Head of caudate nucleus (tissue), 42 donors: ENCODE measurements at regions of chr1 and their contacts with region 1.

Region 1: GRCh38 chr1:47437447-47438164 is at the start of gene FOXD2:
- DNase-seq: peak in 39 of 42 donors; percentile 24 to 88 (median 68)

Region 2: DNA sequence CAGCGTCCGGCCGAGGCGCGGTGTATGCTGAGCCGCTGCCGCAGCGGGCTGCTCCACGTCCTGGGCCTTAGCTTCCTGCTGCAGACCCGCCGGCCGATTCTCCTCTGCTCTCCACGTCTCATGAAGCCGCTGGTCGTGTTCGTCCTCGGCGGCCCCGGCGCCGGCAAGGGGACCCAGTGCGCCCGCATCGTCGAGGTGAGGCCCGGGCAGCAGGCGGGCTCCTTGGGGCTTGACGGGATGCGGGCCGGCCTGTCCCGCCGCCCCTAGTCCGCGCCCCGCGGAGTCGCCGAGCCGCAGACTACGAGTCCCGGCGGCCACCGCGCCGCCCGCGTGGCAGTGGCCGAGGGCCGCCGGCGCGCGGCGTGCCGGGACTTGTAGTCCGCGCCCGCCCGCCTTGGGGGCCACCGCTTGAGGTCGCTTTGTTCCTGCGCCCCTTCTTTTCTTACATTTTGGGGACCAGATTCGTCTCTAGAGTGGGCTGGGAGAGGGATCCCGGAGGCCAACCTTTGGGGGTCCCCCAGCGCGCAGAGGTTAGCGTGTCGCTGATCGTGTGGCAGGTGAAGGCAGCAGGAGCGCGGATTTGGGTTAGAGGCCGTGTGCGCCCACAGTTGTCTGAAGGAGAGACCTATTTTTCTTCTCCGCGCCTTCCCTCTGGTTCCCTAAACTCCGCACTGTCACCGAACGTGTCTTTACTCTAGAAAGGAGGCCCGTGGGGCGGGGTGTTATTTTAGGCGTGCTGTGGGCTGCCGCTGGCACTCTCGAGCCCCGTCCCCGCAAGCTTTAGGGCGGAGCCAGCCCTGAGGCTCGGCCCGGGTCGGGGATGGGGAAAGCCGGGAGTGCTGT is 103.5 kb before region 1 on chr1:
- intact Hi-C with region 1: no loop called
- DNase-seq: peak; percentile 64 to 93 (median 83)

Region 3: DNA sequence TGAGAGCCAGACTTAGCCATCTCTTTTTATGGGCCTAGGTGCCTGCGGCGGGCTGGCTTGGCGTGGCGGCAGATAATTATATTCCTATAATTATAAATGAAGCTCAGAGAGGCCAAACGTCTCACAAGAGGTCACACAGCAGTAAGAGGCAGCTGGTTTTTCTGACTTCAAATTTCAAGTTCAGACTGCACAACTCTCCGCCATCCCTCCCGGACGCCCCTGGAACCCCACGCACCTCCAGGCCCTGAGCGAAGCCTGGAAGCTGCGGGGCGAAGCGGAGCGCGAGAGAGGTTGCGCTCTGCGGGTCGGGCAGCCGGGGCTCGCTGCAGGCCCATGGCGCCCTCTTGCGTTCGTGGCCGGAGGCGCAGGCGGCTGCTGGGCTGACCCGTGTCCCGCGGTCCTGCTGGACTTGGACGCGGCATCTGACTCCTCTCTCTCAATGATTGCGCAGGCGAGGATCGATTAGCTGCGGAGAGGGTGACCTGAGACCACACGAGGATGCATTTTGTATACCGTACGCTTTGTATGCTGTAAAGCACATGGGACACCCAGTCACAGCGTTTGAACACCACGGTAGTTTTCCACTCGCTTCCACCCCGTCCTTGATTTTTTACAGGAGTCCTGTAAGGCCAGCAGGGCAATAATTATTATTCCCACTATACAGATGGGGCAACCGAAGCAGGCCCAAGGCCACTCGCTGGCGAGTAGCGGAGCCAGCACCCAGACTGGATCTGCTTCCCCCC is 272.9 kb after region 1 on chr1:
- intact Hi-C with region 1: loop called (anchors 5 kb)
- DNase-seq: peak; percentile 39 to 89 (median 76)